Lower lobe of right lung (tissue), 2 donors: ENCODE measurements at regions of chr6 and their contacts with region 1.

Region 1: GRCh38 chr6:35139908-35140655 is 1.1 kb downstream of the TCP11 start:
- DNase-seq: no peak
- ATAC-seq: peak; percentile 34 to 73
- H3K4me3 ChIP-seq: no peak overlapping the region
- H3K27ac ChIP-seq: no peak overlapping the region
- H3K4me1 ChIP-seq: peaks cover 8% of the 10 kb centered on the region
- H3K27me3 ChIP-seq: no peaks in the 10 kb centered on the region
- CTCF ChIP-seq: peak; percentile 84

Region 2: DNA sequence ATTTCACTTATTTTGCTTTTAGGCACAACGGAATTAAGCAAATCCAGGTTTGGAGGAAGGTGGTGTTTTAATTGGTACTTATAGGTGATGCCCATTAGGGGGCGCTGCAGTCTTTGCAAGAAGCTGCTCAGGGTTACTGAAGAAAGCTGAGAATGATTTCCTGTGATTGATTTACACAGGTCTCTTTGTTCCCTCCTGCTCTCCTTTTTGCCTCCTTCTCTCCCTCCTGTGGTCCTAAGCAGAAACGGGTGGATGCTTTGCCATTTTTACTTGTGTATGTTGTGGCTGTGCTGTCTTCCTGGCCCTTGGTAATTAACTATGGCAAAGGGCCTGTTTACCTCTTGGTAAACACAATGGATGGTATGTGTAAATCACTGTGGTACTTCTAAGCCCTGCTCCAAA is 153.2 kb before region 1 on chr6:
- intact Hi-C with region 1: loop called (anchors 5 kb)
- DNase-seq: peak; percentile 57
- ATAC-seq: peak; percentile 84 to 89
- H3K4me3 ChIP-seq: no peak overlapping the region
- H3K27ac ChIP-seq: peak overlapping the region; percentile 37
- H3K4me1 ChIP-seq: peaks cover 17% of the 10 kb centered on the region
- H3K27me3 ChIP-seq: no peaks in the 10 kb centered on the region
- CTCF ChIP-seq: peak; percentile 82

Region 3: GRCh38 chr6:35096129-35096862 is 43.8 kb before region 1 on chr6:
- intact Hi-C with region 1: no loop called
- DNase-seq: no peak
- ATAC-seq: peak in 1 of 2 donors; percentile 66
- H3K4me3 ChIP-seq: no peak overlapping the region
- H3K27ac ChIP-seq: no peak overlapping the region
- H3K4me1 ChIP-seq: peaks cover 33% of the 10 kb centered on the region
- H3K27me3 ChIP-seq: no peaks in the 10 kb centered on the region
- CTCF ChIP-seq: no peak